Thyroid gland (tissue), 4 donors: ENCODE measurements at regions of chr17 and their contacts with region 1.

Region 1: DNA sequence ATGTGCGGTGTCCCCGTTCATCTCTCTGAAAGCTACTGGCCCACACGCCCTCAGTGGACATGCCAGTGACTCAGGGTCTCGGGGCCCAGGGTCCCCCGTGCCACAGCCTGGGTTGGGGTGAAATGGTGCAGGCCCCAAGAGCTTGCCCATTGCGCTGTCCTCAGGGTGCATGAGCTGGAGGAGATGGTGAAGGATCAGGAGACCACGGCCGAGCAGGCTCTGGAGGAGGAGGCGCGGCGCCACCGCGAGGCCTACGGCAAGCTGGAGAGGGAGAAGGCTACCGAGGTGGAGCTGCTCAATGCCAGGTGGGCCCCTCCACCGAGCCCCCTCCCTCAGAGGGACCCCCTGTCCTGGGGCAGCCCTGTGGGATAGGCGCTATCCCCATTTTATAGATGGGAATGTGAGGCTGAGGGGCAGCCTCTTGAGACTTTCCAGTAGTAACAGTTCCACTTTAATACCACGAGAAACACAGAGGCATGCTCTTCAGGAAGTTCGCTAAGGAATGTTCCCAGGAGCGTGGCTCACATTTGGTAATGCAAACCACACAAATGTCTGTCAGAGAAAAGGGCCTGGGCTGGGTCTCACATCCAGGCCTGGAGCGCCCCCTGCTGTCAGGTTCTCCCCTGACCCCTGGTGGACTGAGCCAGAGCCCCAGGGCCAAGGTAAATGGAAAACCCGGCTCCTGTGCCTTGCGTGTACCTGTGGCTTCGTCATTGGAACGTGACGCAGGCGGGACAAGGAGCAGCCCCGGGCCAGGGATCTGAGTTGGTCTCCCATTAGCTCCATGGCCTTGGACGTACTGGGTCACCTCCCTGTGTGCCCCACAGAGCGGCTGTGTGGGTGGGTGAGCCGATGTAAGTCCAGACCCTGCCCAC is 133.7 kb downstream of the RAB11FIP4 start:
- DNase-seq: peak; percentile 83 to 88
- H3K4me3 ChIP-seq: no peak overlapping the region
- H3K27ac ChIP-seq: no peak overlapping the region
- H3K4me1 ChIP-seq: peaks cover 0 to 4% of the 10 kb centered on the region in 2 donors
- H3K27me3 ChIP-seq: no peaks in the 10 kb centered on the region
- CTCF ChIP-seq: peak; percentile 80 to 92 (median 86)
- POLR2A ChIP-seq: no peak

Region 2: DNA sequence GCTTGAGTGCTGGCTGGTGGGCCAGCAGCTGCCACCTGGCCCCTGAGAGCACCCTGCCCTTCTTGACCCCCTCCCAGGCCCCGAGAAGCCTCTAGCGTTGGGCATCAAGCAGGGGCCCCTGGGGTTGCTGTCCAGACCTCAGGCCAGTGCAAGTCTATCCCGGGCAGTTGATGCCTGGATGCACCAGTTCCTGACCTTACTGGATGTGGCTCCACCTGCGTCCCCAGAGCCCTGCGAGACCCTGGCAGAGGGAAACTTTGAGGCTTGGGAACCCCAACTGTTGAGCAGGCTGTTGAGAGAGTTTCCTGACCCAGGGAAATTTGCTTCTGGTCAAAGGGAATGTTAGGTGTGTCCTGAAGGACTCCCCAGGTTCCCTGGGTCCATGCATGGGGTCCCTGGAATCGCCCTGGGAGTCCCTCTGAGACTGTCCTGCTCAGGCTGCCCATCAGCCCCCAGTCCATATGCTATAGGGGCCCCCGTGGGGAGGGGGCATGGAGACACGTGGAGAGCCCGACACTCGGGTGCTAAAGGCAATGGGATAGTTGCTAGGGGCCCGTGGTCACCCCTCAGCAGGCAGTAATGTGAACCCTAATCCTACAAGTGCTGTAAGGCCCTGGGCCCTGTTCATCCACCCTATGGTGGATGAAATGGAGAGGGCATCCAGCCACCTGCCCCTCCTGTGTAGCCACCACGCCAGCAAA is 87.3 kb before region 1 on chr17:
- intact Hi-C with region 1: loop called (anchors 5 kb)
- DNase-seq: no peak
- H3K4me3 ChIP-seq: no peak overlapping the region
- H3K27ac ChIP-seq: no peak overlapping the region
- H3K4me1 ChIP-seq: peaks cover 0 to 3% of the 10 kb centered on the region in 2 donors
- H3K27me3 ChIP-seq: no peaks in the 10 kb centered on the region
- CTCF ChIP-seq: no peak
- POLR2A ChIP-seq: no peak